Vagina (tissue), 2 donors: ENCODE measurements at regions of chr5 and their contacts with region 1.

Region 1: GRCh38 chr5:81417052-81417451 is 23.1 kb upstream of the ACOT12 start:
- DNase-seq: no peak
- H3K4me3 ChIP-seq: no peak overlapping the region
- H3K27ac ChIP-seq: no peak overlapping the region
- H3K4me1 ChIP-seq: peaks cover under 1% of the 10 kb centered on the region
- H3K27me3 ChIP-seq: no peaks in the 10 kb centered on the region
- CTCF ChIP-seq: no peak
- POLR2A ChIP-seq: no peak

Region 2: GRCh38 chr5:81572201-81572600 is 155.1 kb after region 1 on chr5:
- intact Hi-C with region 1: loop called (anchors 5 kb)
- DNase-seq: no peak
- H3K4me3 ChIP-seq: no peak overlapping the region
- H3K27ac ChIP-seq: no peak overlapping the region
- H3K4me1 ChIP-seq: peaks cover 11% of the 10 kb centered on the region
- H3K27me3 ChIP-seq: no peaks in the 10 kb centered on the region
- CTCF ChIP-seq: no peak
- POLR2A ChIP-seq: no peak